IMR-90 (cell line): ENCODE measurements at regions of chr18 and their contacts with region 1.

Region 1: GRCh38 chr18:46809145-46809544 is 52.3 kb upstream of the ST8SIA5 start:
- DNase-seq: no peak
- ATAC-seq: no peak
- H3K4me3 ChIP-seq: no peak overlapping the region
- H3K27ac ChIP-seq: no peak overlapping the region
- H3K4me1 ChIP-seq: no peaks in the 10 kb centered on the region; the same call in 1 of the 2 replicates
- H3K27me3 ChIP-seq: no peaks in the 10 kb centered on the region
- CTCF ChIP-seq: no peak
- POLR2A ChIP-seq: no peak
- RAD21 ChIP-seq: no peak

Region 2: GRCh38 chr18:46859855-46860254 is 50.7 kb after region 1 on chr18:
- CTCF ChIA-PET with region 1: no interaction called
- POLR2A ChIA-PET with region 1: no interaction called
- dilution Hi-C with region 1: no loop called
- in situ Hi-C with region 1: no loop called
- intact Hi-C with region 1: loop called (anchors 10 kb)
- DNase-seq: peak; percentile 46
- ATAC-seq: no peak; the same call in 1 of the 2 replicates
- H3K4me3 ChIP-seq: no peak overlapping the region
- H3K27ac ChIP-seq: no peak overlapping the region
- H3K4me1 ChIP-seq: no peaks in the 10 kb centered on the region
- H3K27me3 ChIP-seq: no peaks in the 10 kb centered on the region
- CTCF ChIP-seq: no peak
- POLR2A ChIP-seq: no peak
- RAD21 ChIP-seq: no peak

Region 3: DNA sequence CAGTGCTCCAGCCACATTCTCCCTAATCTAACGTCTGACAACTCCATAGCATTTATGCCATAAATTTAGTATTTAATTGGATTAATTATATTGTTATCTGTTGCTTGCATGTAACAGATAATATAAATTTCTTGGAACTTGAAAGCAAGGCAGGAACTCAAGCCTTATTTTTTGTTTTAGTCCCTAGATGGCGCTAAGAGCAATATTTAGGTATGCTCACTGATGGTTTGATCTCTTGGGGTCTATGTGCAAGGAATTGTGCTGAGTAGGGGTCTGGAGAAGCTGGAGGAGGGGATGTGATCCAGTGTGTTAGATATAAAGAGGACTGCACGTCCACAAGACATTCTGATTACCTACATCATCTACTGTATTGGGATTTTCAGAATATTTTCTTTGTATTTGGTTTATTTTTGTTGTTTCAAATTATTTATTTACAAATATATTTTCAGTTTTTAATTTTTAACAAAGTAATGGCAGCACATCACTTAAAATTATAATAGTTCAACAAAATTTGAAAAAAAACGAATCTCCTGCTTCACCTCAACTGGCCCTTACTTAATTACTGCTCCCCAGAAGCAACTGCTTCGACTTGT is 141.0 kb after region 1 on chr18:
- CTCF ChIA-PET with region 1: no interaction called
- POLR2A ChIA-PET with region 1: no interaction called
- dilution Hi-C with region 1: no loop called
- in situ Hi-C with region 1: no loop called
- intact Hi-C with region 1: no loop called
- DNase-seq: no peak
- ATAC-seq: no peak
- H3K4me3 ChIP-seq: no peak overlapping the region
- H3K27ac ChIP-seq: no peak overlapping the region
- H3K4me1 ChIP-seq: no peaks in the 10 kb centered on the region
- H3K27me3 ChIP-seq: no peaks in the 10 kb centered on the region
- CTCF ChIP-seq: peak; percentile 33
- POLR2A ChIP-seq: no peak
- RAD21 ChIP-seq: no peak

Region 4: DNA sequence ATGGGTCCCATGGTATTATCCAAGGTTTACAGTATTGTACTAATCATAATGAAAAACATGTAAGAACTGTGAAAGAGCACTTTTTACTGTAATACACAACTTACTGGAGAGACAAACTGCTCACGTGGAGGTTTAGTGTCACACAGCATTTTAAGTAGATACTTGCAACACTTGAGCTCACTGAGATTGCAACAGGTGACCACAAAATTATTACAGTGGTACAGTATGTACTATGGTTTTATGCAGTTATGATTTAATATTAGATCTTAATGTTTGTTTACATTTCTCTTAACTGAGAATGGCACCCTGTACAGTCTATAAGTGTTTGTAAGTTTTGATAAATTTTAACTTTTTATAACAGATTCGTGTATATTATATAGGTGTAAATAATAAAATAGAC is 560.9 kb after region 1 on chr18:
- CTCF ChIA-PET with region 1: no interaction called
- POLR2A ChIA-PET with region 1: no interaction called
- dilution Hi-C with region 1: no loop called
- in situ Hi-C with region 1: no loop called
- intact Hi-C with region 1: no loop called
- DNase-seq: no peak
- ATAC-seq: no peak
- H3K4me3 ChIP-seq: no peak overlapping the region
- H3K27ac ChIP-seq: no peak overlapping the region
- H3K4me1 ChIP-seq: no peaks in the 10 kb centered on the region
- H3K27me3 ChIP-seq: no peaks in the 10 kb centered on the region
- CTCF ChIP-seq: no peak
- POLR2A ChIP-seq: no peak
- RAD21 ChIP-seq: no peak